WTC11 (cell line): ENCODE measurements at regions of chr3 and their contacts with region 1.

Region 1: GRCh38 chr3:14203521-14204079 is 25.0 kb downstream of the LSM3 start:
- DNase-seq: peak; percentile 60
- ATAC-seq: peak; percentile 81
- H3K4me3 Mint-ChIP-seq: no peak overlapping the region
- H3K27ac Mint-ChIP-seq: peak overlapping the region; percentile 74; the same call in 1 of the 2 replicates
- H3K4me1 Mint-ChIP-seq: peaks cover 5% of the 10 kb centered on the region; the same call in 1 of the 2 replicates
- H3K27me3 Mint-ChIP-seq: no peaks in the 10 kb centered on the region
- CTCF ChIP-seq: peak; percentile 71; the same call in 1 of the 2 replicates

Region 2: DNA sequence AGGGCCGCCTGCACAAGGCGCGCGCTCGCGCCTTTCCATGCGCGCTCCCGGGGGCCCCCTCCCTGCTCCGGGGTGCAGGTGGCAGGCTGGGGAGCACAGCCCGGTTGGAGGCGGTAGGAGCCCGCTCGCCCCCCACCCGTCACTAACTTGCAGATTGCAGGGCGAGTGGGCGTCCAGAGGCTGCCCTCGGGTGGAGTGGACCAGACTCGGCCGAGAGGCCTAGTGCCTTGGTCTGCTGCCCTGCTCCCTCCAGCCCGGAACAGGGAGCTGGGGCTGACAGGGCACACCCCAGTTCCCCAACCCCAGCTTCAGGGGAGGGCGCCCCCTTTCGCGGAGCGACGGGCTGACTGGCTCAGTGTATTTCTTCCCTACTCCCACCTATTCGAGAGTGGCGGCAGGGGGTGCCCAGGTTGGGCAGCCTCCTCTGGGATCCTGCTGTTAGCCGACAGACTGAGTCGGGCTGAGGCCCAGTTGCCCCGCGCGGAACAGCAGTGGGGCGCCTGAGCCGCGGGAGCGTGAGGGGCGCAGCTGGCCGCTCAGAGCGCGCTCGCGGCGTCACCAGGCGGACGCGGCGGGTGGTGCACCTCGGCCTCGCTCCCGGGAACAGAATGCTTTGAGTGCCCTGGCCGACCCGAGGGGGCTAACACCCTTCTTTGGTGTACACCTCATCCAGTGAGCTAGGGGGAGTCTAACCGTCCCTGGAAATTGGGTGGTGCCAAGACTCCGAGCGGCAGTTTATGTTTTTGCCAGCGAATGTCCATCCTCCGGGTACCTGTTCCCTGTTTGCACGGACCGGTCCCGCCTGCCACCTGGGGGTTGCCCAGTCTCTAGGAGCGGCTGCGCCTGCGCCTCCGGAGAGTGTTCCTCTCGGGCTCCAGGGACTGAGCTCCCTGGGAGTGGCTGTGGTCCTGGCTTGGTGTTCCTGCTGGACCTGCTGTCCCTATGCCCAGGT is 323.1 kb before region 1 on chr3:
- CTCF ChIA-PET with region 1: no interaction called
- POLR2A ChIA-PET with region 1: no interaction called
- DNase-seq: peak; percentile 68
- ATAC-seq: peak; percentile 52
- H3K4me3 Mint-ChIP-seq: peak overlapping the region; percentile 57
- H3K27ac Mint-ChIP-seq: no peak overlapping the region
- H3K4me1 Mint-ChIP-seq: no peaks in the 10 kb centered on the region
- H3K27me3 Mint-ChIP-seq: peaks cover 94% of the 10 kb centered on the region
- CTCF ChIP-seq: peak; percentile 37

Region 3: DNA sequence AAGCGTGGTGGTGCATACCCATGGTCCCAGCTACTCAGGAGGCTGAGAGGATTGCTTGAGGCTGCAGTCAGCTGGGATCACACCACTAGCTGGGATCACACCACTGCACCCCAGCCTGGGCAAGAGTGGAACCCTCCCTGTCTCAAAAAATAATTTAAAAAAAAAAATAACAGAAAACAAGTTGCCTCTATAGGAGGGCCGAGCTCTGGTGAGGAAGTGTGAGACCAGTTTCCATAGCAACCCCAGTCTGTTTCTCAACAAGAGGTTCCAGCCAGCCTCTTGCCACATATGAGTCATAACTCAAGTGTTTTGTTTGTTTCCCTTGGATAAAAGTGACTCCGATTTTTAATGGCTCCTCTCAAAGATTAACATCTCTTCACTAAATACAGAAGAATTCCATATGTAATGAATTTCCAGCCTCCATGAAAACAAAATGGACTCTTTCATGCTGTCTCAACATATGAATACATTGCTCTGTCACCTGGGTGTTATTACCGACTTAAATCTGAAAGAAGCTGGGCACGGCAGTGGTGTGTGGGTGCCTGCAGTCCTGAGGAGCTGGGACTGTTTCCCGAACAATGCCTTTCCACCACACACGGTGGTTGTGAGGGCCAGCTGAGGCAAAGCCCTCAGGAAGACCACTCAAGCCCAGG is 59.1 kb before region 1 on chr3:
- CTCF ChIA-PET with region 1: interaction called, 13 read pairs
- POLR2A ChIA-PET with region 1: no interaction called
- DNase-seq: no peak
- ATAC-seq: peak; percentile 10; the same call in 1 of the 2 replicates
- H3K4me3 Mint-ChIP-seq: no peak overlapping the region
- H3K27ac Mint-ChIP-seq: peak overlapping the region; percentile 88
- H3K4me1 Mint-ChIP-seq: peaks cover 31% of the 10 kb centered on the region
- H3K27me3 Mint-ChIP-seq: no peaks in the 10 kb centered on the region
- CTCF ChIP-seq: no peak

Region 4: DNA sequence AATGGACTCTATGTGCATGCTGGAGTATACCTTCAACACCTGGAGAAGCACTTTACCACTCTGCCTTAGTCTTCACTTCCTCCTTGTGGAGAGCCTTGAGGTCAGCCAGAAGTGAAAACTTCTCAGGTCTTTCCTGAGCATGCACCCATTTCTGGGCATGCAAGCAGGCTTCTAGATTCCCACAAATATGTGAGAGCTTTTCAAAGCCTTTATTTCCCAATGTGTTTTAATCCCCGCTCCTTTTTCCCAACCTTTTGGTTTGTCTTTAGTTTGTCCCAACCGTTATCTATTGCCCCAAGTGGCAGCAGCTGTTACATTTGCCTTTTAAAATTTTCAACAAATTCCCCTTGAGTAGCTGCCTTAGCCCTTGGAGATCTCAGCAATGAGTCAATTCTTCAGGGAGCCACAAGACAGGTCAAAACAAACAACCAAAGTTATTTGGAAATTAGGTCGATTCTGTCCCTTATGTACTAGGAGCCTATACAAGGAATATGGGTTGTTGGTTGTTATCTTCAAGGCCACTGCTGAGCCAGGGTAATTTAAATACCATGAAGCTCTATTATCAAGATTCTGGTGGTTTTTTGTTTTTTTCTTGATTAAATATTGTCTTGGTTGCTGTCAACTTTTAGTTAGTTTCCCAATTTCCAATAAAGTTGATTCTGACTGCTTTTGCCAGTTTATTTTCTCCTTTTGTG is 19.4 kb after region 1 on chr3:
- CTCF ChIA-PET with region 1: interaction called, 43 read pairs
- POLR2A ChIA-PET with region 1: no interaction called
- DNase-seq: no peak
- ATAC-seq: no peak
- H3K4me3 Mint-ChIP-seq: no peak overlapping the region
- H3K27ac Mint-ChIP-seq: no peak overlapping the region
- H3K4me1 Mint-ChIP-seq: peaks cover 27% of the 10 kb centered on the region
- H3K27me3 Mint-ChIP-seq: peaks cover 7% of the 10 kb centered on the region; the same call in 1 of the 2 replicates
- CTCF ChIP-seq: no peak

Region 5: GRCh38 chr3:14274999-14275961 is 71.7 kb after region 1 on chr3:
- CTCF ChIA-PET with region 1: interaction called, 15 read pairs
- POLR2A ChIA-PET with region 1: no interaction called
- DNase-seq: peak; percentile 55
- ATAC-seq: peak; percentile 25
- H3K4me3 Mint-ChIP-seq: no peak overlapping the region
- H3K27ac Mint-ChIP-seq: no peak overlapping the region
- H3K4me1 Mint-ChIP-seq: peaks cover 86% of the 10 kb centered on the region
- H3K27me3 Mint-ChIP-seq: peaks cover under 1% of the 10 kb centered on the region; the same call in 1 of the 2 replicates
- CTCF ChIP-seq: peak; percentile 46; the same call in 1 of the 2 replicates

Region 6: GRCh38 chr3:14431892-14432834 is 228.6 kb after region 1 on chr3:
- CTCF ChIA-PET with region 1: interaction called, 11 read pairs
- POLR2A ChIA-PET with region 1: no interaction called
- DNase-seq: no peak
- ATAC-seq: peak; percentile 55
- H3K4me3 Mint-ChIP-seq: no peak overlapping the region
- H3K27ac Mint-ChIP-seq: peak overlapping the region; percentile 10; the same call in 1 of the 2 replicates
- H3K4me1 Mint-ChIP-seq: peaks cover 39% of the 10 kb centered on the region
- H3K27me3 Mint-ChIP-seq: no peaks in the 10 kb centered on the region
- CTCF ChIP-seq: no peak

Region 7: GRCh38 chr3:14508961-14509795 is 305.6 kb after region 1 on chr3:
- CTCF ChIA-PET with region 1: interaction called, 22 read pairs
- POLR2A ChIA-PET with region 1: no interaction called
- DNase-seq: peak; percentile 95
- ATAC-seq: peak; percentile 86
- H3K4me3 Mint-ChIP-seq: peak overlapping the region; percentile 70
- H3K27ac Mint-ChIP-seq: no peak overlapping the region
- H3K4me1 Mint-ChIP-seq: peaks cover 9% of the 10 kb centered on the region; the same call in 1 of the 2 replicates
- H3K27me3 Mint-ChIP-seq: no peaks in the 10 kb centered on the region; the same call in 1 of the 2 replicates
- CTCF ChIP-seq: peak; percentile 99